Naive thymus-derived CD8-positive, alpha-beta T cell (primary cell): ENCODE measurements at regions of chr7 and their contacts with region 1.

Region 1: GRCh38 chr7:2508327-2509215 is 11.0 kb upstream of the LFNG start:
- DNase-seq: peak; percentile 70 to 94 (median 89)
- ATAC-seq: peak; percentile 60 to 78
- H3K4me3 Mint-ChIP-seq: peak overlapping the region; percentile 73 to 88 (median 82)
- H3K27ac Mint-ChIP-seq: peak overlapping the region in 9 of 10 donors; percentile 96 to 99 (median 98)
- H3K4me1 Mint-ChIP-seq: peaks cover 29 to 74% (median 63%) of the 10 kb centered on the region in 4 donors
- H3K27me3 Mint-ChIP-seq: no peaks in the 10 kb centered on the region

Region 2: DNA sequence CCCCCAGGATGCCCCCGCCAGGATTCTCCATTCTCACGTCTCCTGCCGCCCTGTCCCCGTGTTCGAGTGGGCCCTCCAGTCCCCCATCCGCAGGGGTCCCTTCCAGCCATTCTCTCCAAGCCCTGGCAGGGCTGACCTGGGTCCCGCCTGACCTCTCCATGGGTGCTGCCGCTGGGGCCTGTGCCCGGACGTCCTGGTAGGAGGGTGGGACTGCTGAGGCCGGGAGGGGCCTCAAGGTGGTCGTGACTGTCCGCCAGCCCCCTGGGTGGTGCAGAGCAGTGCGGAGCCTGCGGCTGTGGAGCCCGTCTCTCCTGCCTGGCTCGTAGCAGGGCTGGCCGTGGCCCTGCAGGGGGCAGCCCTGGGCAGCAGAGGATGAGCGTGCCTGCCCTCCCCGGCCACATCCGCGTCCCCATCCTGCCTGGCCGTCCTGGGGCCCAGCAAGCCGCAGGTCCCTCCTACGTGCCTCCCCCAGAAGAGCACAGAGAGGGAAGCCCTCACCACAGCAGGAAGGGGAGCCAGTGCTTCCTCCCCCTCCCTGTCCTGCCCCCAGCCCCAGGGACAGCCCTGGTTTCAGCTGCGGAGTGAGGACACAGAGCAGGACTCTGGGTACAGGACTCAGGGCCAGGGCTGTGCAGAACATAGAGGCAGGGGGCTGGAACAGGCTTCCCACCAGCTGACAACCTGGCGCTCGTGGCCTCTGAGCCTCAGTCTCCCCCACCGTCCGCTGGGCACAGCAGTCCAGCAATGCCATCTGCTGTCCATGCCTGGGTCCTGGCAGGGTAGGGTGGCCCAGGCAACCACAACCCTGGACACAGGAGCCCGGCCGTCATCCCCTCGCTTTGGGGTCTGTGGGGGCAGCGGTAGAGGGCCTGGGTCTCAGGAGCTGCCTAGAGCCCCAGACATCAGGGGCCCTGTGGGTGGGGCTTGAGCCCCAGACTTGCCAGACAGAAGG is 30.8 kb before region 1 on chr7:
- POLR2A ChIA-PET with region 1: interaction called, 15 read pairs
- DNase-seq: peak; percentile 33 to 81 (median 62)
- ATAC-seq: peak; percentile 96 to 98
- H3K4me3 Mint-ChIP-seq: peak overlapping the region in 2 of 10 donors; percentile 19 to 30
- H3K27ac Mint-ChIP-seq: peak overlapping the region in 1 of 10 donors; percentile 32
- H3K4me1 Mint-ChIP-seq: peaks cover 1 to 10% (median 8%) of the 10 kb centered on the region in 4 donors
- H3K27me3 Mint-ChIP-seq: peaks cover 0 to 1% (median 0%) of the 10 kb centered on the region in 5 donors

Region 3: DNA sequence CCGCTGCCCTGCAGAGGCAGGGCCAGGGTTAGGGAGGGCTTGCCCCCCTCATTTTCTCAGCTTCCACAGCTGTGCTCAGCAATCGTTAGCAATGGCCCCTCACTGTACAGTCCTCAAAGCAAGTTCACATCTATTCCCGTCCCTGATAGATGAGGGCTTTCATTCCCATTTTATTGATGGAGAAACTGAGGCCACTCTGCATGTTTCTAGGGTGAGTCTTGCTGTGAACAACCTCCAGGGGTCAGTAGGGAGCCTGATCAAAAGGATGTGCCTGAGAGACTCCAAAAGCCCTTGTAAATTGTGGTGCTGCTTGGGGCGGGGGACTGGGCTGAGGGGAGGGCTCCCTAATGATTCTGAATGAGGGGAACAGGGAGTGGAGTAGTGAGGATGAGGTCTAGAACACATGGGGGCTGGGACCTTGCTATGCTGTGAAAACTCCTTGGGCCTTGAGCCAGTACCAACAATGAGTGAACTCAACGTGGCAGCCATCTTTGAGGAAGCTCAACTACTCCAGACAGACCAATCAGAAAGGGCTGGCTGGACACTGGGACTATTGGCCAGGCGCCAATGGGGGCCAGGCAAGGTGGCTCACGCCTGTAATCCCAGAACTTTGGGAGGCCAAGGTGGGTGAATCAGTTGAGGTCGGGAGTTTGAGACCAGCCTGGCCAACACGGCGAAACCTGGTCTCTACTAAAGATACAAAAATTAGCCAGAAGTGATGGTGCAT is 25.7 kb before region 1 on chr7:
- POLR2A ChIA-PET with region 1: interaction called, 15 read pairs
- DNase-seq: no peak
- ATAC-seq: no peak
- H3K4me3 Mint-ChIP-seq: no peak overlapping the region
- H3K27ac Mint-ChIP-seq: no peak overlapping the region
- H3K4me1 Mint-ChIP-seq: peaks cover 3 to 8% (median 4%) of the 10 kb centered on the region in 4 donors
- H3K27me3 Mint-ChIP-seq: peaks cover 0 to 4% (median 0%) of the 10 kb centered on the region in 5 donors

Region 4: GRCh38 chr7:2497500-2498336 is 10.9 kb before region 1 on chr7:
- POLR2A ChIA-PET with region 1: interaction called, 20 read pairs
- DNase-seq: no peak
- ATAC-seq: peak in 1 of 2 donors; percentile 9
- H3K4me3 Mint-ChIP-seq: no peak overlapping the region
- H3K27ac Mint-ChIP-seq: peak overlapping the region in 1 of 10 donors; percentile 68
- H3K4me1 Mint-ChIP-seq: peaks cover 2 to 25% (median 8%) of the 10 kb centered on the region in 4 donors
- H3K27me3 Mint-ChIP-seq: peaks cover 0 to 5% (median 0%) of the 10 kb centered on the region in 5 donors

Region 5: GRCh38 chr7:2545746-2546425 is 37.3 kb after region 1 on chr7:
- POLR2A ChIA-PET with region 1: interaction called, 10 read pairs
- DNase-seq: no peak
- ATAC-seq: no peak
- H3K4me3 Mint-ChIP-seq: peak overlapping the region in 1 of 10 donors; percentile 6
- H3K27ac Mint-ChIP-seq: peak overlapping the region in 1 of 10 donors; percentile 40
- H3K4me1 Mint-ChIP-seq: peaks cover 8 to 19% (median 15%) of the 10 kb centered on the region in 4 donors
- H3K27me3 Mint-ChIP-seq: no peaks in the 10 kb centered on the region

Region 6: GRCh38 chr7:2555121-2556052 is 46.8 kb after region 1 on chr7 and contains the start of gene BRAT1:
- POLR2A ChIA-PET with region 1: interaction called, 32 read pairs
- DNase-seq: peak; percentile 86 to 97 (median 94)
- ATAC-seq: peak; percentile 83 to 87
- H3K4me3 Mint-ChIP-seq: peak within 1 kb of the TSS; percentile 81 to 95 (median 87)
- H3K27ac Mint-ChIP-seq: peak within 1 kb of the TSS; percentile 59 to 95 (median 90)
- H3K4me1 Mint-ChIP-seq: peaks cover 10 to 55% (median 42%) of the 10 kb centered on the region in 4 donors
- H3K27me3 Mint-ChIP-seq: no peaks in the 10 kb centered on the region
- polyA plus RNA-seq, gene BRAT1: 21.0 to 43.6 (median 25.4) TPM

Region 7: DNA sequence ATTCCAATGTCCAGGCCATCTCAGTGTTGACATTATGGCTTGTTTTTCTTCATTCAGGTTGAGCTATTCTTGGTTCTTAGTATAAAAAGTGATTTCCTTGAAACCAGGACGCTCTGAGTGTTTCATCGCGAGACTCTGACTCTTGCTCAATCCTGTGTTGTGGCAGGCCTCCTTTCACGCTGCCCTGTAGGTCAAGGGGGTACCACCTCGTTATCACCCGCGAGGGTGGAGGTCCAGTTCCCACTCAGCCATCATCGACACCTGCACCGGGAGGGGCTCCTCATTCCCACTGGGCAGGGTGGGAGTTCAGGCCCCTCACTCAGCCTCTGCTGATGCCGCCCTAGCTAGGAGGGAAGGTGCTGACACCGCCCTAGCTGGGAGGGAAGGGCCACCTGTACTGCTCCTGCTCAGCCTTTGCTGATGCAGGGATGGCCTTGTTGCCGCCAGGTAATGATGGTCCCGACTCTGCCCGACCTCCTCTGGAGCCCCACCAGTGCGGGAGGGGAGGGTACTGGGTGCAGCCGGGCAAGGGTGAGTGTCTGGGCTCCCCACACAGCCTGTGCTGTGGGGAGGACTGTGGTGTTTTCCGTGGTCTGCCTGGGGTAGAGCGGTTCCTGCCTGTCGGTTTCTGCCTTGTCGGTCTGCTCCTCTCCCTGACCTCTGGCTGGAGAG is 66.6 kb after region 1 on chr7:
- POLR2A ChIA-PET with region 1: no interaction called
- DNase-seq: no peak
- ATAC-seq: no peak
- H3K4me3 Mint-ChIP-seq: no peak overlapping the region
- H3K27ac Mint-ChIP-seq: no peak overlapping the region
- H3K4me1 Mint-ChIP-seq: peaks cover 0 to 8% (median under 1%) of the 10 kb centered on the region in 4 donors
- H3K27me3 Mint-ChIP-seq: no peaks in the 10 kb centered on the region

Region 8: DNA sequence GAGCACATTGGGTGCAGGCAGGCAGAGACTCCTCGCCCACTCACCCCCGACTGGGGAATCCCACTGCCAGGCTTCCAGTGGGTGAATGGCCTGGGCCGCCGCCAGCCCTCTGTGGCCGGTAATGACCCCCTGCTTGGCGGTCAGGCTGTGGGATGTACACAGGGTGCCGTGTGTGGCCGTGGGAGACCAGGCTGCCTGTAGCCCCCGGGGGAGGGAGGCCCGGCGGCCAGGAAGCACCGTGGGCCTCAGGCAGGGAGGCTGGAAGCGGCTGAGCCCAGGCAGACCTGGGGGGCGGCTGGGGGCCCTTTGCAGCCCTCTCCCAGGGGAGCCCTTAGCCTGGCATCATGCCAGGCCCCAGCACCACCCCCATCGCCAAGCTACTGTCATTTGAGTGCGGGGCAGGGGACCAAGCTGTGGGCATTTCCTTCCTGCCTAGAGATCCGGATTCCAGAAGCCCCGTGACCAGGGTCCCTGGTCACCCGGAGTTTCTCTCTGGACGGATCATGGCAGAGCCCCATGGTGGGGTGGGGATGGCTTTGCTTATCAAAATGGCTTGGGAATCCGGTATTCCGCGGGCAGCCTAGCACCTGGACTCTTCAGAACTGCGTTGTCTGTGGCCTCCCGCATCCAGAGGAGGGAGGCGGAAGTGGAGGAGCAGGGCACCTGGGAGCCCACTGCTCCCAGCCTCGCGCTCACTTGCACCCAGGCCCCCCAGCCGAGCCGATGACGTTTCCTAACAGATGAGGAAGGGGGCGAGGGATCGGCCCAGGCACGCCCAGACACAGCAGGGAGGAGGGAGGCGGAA is 124.4 kb after region 1 on chr7:
- POLR2A ChIA-PET with region 1: interaction called, 18 read pairs
- DNase-seq: peak in 9 of 10 donors; percentile 19 to 50 (median 37)
- ATAC-seq: peak; percentile 13 to 31
- H3K4me3 Mint-ChIP-seq: peak overlapping the region; percentile 85 to 94 (median 90)
- H3K27ac Mint-ChIP-seq: peak overlapping the region; percentile 19 to 93 (median 80)
- H3K4me1 Mint-ChIP-seq: peaks cover 11 to 32% (median 23%) of the 10 kb centered on the region in 4 donors
- H3K27me3 Mint-ChIP-seq: no peaks in the 10 kb centered on the region

Region 9: DNA sequence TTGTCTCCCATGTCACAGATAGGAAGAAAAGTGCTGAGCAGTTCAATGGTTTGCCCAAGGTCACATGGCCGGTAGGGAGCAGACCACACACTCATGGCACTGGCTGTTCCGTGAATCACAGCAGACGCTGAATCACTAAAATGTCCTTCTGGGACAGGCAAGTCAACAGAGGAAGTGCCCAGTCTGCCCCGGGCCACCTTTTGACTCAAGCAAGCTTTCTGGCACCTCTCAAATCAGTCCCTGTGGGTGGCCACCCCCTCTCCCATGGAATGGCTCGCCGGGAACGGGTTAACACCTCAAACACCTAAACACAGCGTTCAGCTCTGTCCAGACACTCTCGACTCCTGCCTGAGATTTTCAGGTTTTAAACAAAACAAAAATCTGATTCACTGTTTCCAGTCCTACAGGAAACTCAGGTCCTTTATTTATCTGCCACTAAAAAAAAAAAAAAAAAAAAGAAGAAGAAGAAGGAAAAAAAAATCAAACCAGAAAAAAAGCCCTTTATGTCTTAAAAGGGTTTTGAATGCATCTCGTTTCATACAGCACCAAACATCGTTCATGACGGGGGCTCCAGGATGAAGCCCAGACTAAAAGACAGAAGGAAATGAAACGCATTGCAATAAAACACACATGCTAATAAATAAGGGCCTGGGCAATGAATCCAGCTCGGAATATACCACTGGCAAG is 519.6 kb after region 1 on chr7:
- POLR2A ChIA-PET with region 1: no interaction called
- DNase-seq: no peak
- ATAC-seq: peak; percentile 63 to 74
- H3K4me3 Mint-ChIP-seq: peak overlapping the region; percentile 26 to 81 (median 64)
- H3K27ac Mint-ChIP-seq: peak overlapping the region; percentile 77 to 93 (median 88)
- H3K4me1 Mint-ChIP-seq: peaks cover 32 to 68% (median 66%) of the 10 kb centered on the region in 4 donors
- H3K27me3 Mint-ChIP-seq: no peaks in the 10 kb centered on the region